Activated CD4-positive, alpha-beta T cell treated with anti-CD3 and anti-CD28 coated beads for 36 hours (primary cell): ENCODE measurements at regions of chr4 and their contacts with region 1.

Region 1: DNA sequence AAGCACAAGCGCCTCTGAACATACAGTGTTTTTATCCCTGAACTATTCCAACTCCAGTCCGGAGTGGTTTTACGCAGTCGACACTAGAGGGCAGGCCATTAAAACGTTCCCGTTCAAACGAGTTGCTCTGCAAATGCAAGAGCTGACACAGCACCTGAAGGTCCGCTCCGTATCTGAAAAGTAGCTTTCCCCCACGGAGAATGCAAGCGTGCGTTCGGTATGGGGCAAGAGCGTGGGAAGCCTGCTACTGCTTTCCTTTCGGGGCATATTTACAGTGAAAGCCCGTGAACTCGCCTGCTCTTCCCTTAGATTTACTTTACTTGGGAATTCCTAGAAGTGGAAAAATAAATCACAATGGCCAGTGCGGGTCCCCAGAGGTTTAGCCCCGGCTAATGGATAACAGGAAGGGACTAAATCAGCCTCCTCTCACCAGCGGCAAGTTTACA is 190.8 kb downstream of the TSPAN5 start:
- DNase-seq: peak; percentile 85
- ATAC-seq: peak; percentile 95
- H3K4me3 Mint-ChIP-seq: peak overlapping the region; percentile 52
- H3K27ac Mint-ChIP-seq: peak overlapping the region; percentile 37
- H3K4me1 Mint-ChIP-seq: peaks cover 23% of the 10 kb centered on the region
- H3K27me3 Mint-ChIP-seq: no peaks in the 10 kb centered on the region

Region 2: DNA sequence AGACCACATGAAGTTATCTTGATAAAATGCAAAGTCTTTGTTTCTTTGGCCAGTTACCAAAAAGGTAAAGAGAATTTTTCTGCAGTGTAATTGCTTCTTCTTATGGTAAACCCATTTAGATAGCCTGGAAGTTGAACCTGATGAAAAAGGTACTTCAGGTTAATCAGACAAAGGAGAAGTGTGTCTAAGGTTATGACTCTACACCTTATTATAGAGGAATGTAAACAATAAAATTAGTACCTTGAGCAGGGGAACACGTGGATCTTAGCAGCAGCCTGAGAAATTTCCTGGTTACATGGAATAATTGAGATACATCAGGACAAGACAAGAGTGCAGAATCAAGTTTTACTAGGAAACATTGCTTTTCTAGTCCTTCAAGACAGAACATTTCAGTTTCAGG is 135.6 kb before region 1 on chr4:
- CTCF ChIA-PET with region 1: no interaction called
- POLR2A ChIA-PET with region 1: no interaction called
- intact Hi-C with region 1: no loop called
- DNase-seq: no peak
- ATAC-seq: no peak
- H3K4me3 Mint-ChIP-seq: no peak overlapping the region
- H3K27ac Mint-ChIP-seq: no peak overlapping the region
- H3K4me1 Mint-ChIP-seq: no peaks in the 10 kb centered on the region
- H3K27me3 Mint-ChIP-seq: no peaks in the 10 kb centered on the region

Region 3: DNA sequence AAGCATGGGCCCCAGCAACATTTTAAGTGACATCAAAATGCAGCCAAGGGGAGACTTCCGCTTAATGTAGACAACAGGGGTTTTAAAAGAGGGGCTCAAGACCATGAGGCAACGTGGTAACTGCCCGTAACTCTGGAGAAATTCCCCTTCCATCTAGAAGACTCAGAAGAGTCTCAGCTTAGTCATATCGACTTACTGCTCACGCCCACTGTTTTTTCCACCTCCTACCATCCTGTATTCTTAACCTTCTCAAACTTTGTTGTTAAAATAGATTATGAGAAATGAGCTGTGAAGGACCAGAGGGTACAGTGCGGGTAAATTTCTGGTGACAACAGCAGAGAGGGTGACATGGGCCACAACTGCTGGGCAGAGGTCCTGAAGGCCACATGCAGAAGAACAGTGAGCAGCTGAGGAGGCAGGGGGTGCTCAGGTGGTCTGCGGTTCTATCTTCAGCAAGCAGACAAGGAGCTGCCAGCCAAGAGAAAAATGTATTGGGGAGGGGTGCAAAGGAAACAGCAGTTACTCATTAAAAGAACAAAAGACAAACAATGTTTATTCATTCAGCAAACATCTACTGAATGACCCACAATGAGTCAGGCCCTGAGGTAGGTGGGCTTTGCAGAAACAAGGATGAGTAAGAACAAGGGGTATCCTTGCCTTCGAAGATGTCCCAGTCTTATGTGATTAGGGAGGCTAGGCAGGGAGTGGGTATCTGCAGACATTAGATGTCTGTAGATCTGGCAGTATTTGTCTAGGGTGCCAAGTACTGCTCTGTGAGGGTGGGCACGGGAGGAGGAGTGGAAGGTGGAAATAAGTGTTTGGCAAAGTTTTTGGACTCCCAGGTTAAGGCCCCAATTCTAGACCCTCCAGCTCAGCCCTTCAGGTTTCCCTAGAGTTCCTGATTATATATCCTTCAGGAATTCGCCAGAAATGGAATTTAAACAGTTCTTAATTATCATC is 15.5 kb after region 1 on chr4:
- CTCF ChIA-PET with region 1: interaction called, 21 read pairs
- POLR2A ChIA-PET with region 1: no interaction called
- intact Hi-C with region 1: no loop called
- DNase-seq: peak; percentile 74
- ATAC-seq: peak; percentile 84
- H3K4me3 Mint-ChIP-seq: peak overlapping the region; percentile 54
- H3K27ac Mint-ChIP-seq: peak overlapping the region; percentile 98
- H3K4me1 Mint-ChIP-seq: peaks cover 80% of the 10 kb centered on the region
- H3K27me3 Mint-ChIP-seq: no peaks in the 10 kb centered on the region

Region 4: GRCh38 chr4:98851806-98852205 is 384.2 kb after region 1 on chr4:
- CTCF ChIA-PET with region 1: interaction called, 3 read pairs
- POLR2A ChIA-PET with region 1: no interaction called
- intact Hi-C with region 1: loop called in 1 of 2 experiments (anchors 2 kb)
- DNase-seq: no peak
- ATAC-seq: no peak
- H3K4me3 Mint-ChIP-seq: no peak overlapping the region
- H3K27ac Mint-ChIP-seq: no peak overlapping the region
- H3K4me1 Mint-ChIP-seq: no peaks in the 10 kb centered on the region
- H3K27me3 Mint-ChIP-seq: peaks cover 5% of the 10 kb centered on the region

Region 5: DNA sequence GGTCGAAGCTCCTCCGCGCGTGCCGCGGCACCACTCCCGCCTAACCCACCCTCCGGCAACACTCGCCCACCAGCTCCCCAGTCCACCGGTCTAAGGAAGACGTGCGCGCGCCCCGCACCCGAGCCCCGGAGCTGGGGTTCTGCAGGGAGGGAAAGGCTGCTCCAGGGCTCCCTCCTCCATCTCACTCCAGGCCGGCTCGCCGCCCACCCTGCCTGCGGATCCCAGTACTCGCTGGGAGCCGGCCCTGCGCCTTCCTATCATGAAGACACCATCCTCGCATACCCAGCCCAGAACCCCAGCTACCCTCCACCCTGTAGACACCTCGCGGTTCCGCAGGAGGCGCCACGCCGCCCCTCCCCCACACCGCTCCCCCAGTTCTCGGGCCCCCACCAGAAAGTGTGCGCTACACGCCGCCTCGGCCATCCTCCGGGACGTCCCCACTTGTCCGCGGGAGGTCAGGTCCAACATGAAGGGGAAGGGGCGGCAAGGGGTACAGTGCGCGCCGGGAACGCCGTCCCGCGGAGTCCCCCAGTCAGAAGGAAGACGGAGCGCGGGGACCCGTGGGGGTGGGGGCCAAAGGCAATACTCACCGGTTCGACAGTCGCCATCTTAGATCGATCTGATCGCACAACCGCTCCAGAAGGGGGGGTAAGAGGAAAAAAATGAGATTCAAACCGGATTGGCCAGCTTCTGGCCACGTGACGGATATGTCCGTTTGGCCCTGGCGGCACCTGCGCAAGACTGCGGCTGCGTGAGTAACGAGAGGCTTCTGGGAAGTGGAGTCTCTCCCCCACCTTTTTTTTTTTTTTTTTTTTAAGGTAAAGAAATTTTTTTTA is 461.1 kb after region 1 on chr4 and contains the start of gene EIF4E:
- CTCF ChIA-PET with region 1: interaction called, 4 read pairs
- POLR2A ChIA-PET with region 1: interaction called, 4 read pairs
- intact Hi-C with region 1: loop called in 1 of 2 experiments (anchors 5 kb)
- DNase-seq: peak; percentile 98
- ATAC-seq: peak; percentile 80
- H3K4me3 Mint-ChIP-seq: peak within 1 kb of the TSS; percentile 92
- H3K27ac Mint-ChIP-seq: peak within 1 kb of the TSS; percentile 100
- H3K4me1 Mint-ChIP-seq: peaks cover 47% of the 10 kb centered on the region
- H3K27me3 Mint-ChIP-seq: no peaks in the 10 kb centered on the region
- total RNA-seq, gene EIF4E: 132 to 149 TPM

Region 6: GRCh38 chr4:99061048-99061700 is 593.5 kb after region 1 on chr4:
- CTCF ChIA-PET with region 1: interaction called, 10 read pairs
- POLR2A ChIA-PET with region 1: no interaction called
- intact Hi-C with region 1: loop called (anchors 1 to 5 kb)
- DNase-seq: no peak
- ATAC-seq: peak; percentile 33
- H3K4me3 Mint-ChIP-seq: no peak overlapping the region
- H3K27ac Mint-ChIP-seq: peak overlapping the region; percentile 3
- H3K4me1 Mint-ChIP-seq: peaks cover 5% of the 10 kb centered on the region
- H3K27me3 Mint-ChIP-seq: no peaks in the 10 kb centered on the region

Region 7: DNA sequence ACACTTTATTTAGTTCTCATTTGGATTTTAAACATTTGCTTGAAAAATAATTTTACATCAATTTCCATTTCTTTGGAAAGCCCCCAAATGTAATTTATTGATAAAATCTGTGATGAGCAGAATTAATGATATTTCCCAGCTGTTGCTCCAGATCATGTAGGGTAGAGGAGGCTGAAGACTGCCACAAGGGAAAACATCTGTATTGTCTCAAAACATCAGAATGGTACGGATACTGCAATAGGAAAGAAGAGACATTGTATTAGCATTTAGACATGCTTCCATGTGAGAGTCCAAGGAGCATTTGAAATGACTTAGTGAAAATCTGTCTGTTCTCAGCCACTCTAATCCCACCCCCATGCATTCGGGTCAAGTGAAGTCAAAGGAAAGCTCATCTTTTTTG is 808.8 kb after region 1 on chr4:
- CTCF ChIA-PET with region 1: no interaction called
- POLR2A ChIA-PET with region 1: no interaction called
- intact Hi-C with region 1: no loop called
- DNase-seq: no peak
- ATAC-seq: no peak
- H3K4me3 Mint-ChIP-seq: no peak overlapping the region
- H3K27ac Mint-ChIP-seq: no peak overlapping the region
- H3K4me1 Mint-ChIP-seq: no peaks in the 10 kb centered on the region
- H3K27me3 Mint-ChIP-seq: peaks cover 3% of the 10 kb centered on the region